HCT116 (cell line): ENCODE measurements at regions of chr3 and their contacts with region 1.

Region 1: DNA sequence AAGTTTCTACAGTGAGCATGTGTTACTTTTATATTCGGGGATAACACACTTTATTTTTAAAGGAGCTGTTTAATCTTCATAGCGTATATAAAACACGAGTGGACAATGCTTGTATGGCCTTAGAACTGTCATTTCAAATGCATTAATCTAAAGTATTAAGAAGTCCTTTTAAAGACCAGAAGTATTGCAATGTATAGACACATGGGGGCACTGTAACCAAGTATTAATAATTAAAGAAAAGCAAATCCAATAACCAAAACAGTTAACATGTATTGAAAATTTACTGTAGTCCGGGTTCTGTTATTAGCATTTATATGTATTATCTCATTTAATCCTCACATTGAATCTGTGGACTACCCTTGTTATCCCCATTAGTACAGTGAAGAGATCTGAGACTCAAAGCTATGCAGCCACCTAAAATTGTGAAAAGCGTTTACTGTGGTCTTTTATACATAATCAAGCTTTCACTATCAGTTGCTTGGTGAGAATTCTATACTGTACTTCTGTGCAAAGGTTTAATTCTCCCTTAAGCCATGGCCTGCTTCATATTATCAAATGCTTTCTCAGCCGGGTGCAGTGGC is 10.1 kb downstream of the ARL14 start:
- DNase-seq: no peak
- ATAC-seq: peak; percentile 68; the same call in 1 of the 2 replicates
- H3K4me3 ChIP-seq: no peak overlapping the region
- H3K27ac ChIP-seq: no peak overlapping the region
- H3K4me1 ChIP-seq: peaks cover 0 to 2% of the 10 kb centered on the region in 2 experiments; a peak in 1 of 4 replicates
- H3K27me3 ChIP-seq: no peaks in the 10 kb centered on the region
- CTCF ChIP-seq: peak; percentile 12 to 70 (median 36); a peak in 3 of 6 replicates
- POLR2A ChIP-seq: no peak
- RAD21 ChIP-seq: peak; percentile 57

Region 2: GRCh38 chr3:160676547-160677303 is 10.3 kb before region 1 on chr3 and contains the start of gene ARL14:
- CTCF ChIA-PET with region 1: interaction called, 15 read pairs
- POLR2A ChIA-PET with region 1: interaction called, 4 read pairs
- RAD21 ChIA-PET with region 1: no interaction called
- intact Hi-C with region 1: no loop called
- DNase-seq: peak; percentile 89
- ATAC-seq: peak; percentile 93
- H3K4me3 ChIP-seq: peak within 1 kb of the TSS; percentile 33 to 47
- H3K27ac ChIP-seq: peak within 1 kb of the TSS; percentile 69
- H3K4me1 ChIP-seq: peaks cover 32 to 40% of the 10 kb centered on the region in 2 experiments
- H3K27me3 ChIP-seq: no peaks in the 10 kb centered on the region
- CTCF ChIP-seq: no peak
- POLR2A ChIP-seq: peak; percentile 29
- RAD21 ChIP-seq: no peak
- total RNA-seq, gene ARL14: 0.42 TPM

Region 3: GRCh38 chr3:160707187-160707794 is 20.2 kb after region 1 on chr3:
- CTCF ChIA-PET with region 1: no interaction called
- POLR2A ChIA-PET with region 1: no interaction called
- RAD21 ChIA-PET with region 1: no interaction called
- intact Hi-C with region 1: no loop called
- DNase-seq: peak; percentile 37
- ATAC-seq: peak; percentile 92
- H3K4me3 ChIP-seq: no peak overlapping the region
- H3K27ac ChIP-seq: no peak overlapping the region
- H3K4me1 ChIP-seq: no peaks in the 10 kb centered on the region
- H3K27me3 ChIP-seq: no peaks in the 10 kb centered on the region
- CTCF ChIP-seq: peak; percentile 46 to 74 (median 59); a peak in 5 of 6 replicates
- POLR2A ChIP-seq: no peak
- RAD21 ChIP-seq: peak; percentile 87